Prostate gland (tissue), 2 donors: ENCODE measurements at regions of chr16 and their contacts with region 1.

Region 1: GRCh38 chr16:22190776-22191531 is 15.1 kb upstream of the EEF2K start:
- DNase-seq: peak; percentile 100
- H3K4me3 ChIP-seq: peak overlapping the region; percentile 34 to 68
- H3K27ac ChIP-seq: peak overlapping the region; percentile 96 to 98
- H3K4me1 ChIP-seq: peaks cover 12% of the 10 kb centered on the region
- H3K27me3 ChIP-seq: no peaks in the 10 kb centered on the region
- CTCF ChIP-seq: no peak
- POLR2A ChIP-seq: peak; percentile 95

Region 2: DNA sequence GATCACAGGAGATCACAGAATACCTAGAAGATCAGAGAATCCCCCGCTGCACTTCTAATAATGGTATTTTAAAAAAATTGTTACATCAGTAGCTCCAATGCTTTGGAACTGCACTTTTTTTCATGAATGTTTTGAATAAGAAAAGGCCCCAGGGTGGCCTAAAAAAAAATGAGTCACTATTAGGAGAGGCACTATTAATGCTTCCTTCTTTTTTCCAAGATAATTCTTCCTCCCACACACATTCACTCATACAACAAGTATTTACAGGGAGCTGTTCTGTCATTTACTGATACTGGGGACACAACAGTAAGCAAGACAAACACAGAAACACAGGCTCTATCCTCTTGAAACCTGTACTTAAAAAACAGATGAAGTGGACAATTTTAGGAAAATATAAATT is 189.4 kb before region 1 on chr16:
- intact Hi-C with region 1: loop called (anchors 2 kb)
- DNase-seq: no peak
- H3K4me3 ChIP-seq: no peak overlapping the region
- H3K27ac ChIP-seq: no peak overlapping the region
- H3K4me1 ChIP-seq: no peaks in the 10 kb centered on the region
- H3K27me3 ChIP-seq: no peaks in the 10 kb centered on the region
- CTCF ChIP-seq: no peak
- POLR2A ChIP-seq: no peak

Region 3: DNA sequence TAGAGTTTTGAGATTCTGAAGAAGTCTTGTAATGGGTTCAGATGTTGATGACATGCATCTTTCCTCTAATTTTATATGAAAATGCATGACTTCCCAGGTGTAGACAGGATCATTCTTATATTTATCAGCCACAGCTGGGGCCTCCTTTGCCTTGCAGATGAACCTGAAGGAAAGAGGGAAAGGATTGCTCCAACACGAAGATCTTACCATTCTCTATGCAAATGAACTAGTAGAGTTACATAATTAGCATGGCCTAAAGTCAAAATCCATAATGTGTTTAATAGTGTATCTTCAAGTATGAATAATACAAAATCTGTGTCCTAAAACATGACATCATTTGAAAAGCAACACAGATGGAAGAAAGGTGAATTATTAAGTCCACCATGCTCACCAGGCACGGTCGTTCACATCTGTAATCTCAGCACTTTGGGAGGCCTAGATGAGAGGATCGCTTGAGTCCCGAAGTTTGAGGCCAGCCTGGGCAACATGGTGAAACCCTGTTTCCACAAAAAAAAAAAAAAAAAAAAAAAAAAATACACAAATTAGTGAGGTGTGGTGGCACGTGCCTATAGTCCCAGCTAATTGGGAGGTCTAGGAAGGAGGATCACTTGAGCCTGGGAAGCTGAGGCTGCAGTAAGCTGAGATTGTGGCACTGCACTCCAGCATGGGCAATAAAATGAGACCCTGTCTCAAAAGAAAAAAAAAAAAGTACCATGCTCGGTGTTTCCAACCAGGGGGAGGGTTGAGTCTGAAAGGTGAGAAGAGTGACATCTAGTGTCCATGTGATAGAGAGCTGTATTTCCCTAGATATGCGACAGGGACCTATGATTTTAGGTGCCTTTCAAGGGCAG is 92.3 kb before region 1 on chr16:
- intact Hi-C with region 1: loop called (anchors 5 kb)
- DNase-seq: no peak
- H3K4me3 ChIP-seq: no peak overlapping the region
- H3K27ac ChIP-seq: no peak overlapping the region
- H3K4me1 ChIP-seq: no peaks in the 10 kb centered on the region
- H3K27me3 ChIP-seq: no peaks in the 10 kb centered on the region
- CTCF ChIP-seq: peak in 3 of 4 experiments; percentile 35 to 55 (median 39)
- POLR2A ChIP-seq: no peak

Region 4: DNA sequence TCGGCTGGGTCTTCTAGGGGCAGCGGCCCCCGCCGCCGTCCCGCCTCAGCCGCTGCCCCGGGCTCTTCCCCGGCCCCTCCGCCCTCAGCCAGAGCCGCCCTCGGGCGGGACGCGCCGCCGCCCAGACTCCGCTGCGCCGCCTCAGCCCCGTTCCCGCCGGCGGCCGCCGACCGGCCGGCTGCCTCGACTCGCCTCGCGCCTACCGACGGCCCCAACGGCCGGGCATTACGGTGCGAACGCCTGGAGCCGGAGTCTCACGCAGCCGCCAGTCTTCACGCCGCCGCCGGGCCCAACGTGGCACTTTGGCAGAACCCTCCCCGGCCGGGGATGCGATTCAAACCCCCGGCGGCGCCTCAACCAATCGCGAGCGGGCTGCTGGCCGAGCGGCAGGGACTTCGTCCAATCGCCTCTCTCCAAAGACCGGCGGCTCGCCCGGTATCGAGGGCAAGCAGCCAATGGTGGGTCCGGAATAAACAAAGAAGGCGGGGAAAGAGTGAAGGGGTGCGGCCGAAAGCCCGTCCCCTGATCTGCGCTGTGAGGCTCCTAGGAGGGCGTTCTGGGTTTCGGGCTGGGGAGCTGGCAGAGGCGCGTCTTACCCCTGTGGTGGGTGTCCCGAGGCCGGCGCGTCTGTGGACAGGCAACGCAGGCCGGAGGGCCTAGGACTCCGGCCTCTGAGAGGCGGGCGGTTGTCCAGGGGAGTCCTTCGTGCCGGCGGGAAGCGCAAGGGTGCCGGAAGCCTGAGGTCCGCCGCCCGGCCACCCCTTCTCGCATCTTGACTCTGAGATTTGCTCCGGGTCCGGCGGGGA is 183.6 kb after region 1 on chr16 and contains the start of gene CDR2:
- intact Hi-C with region 1: loop called (anchors 5 kb)
- DNase-seq: peak; percentile 98
- H3K4me3 ChIP-seq: peak within 1 kb of the TSS; percentile 88 to 89
- H3K27ac ChIP-seq: peak within 1 kb of the TSS; percentile 82 to 88
- H3K4me1 ChIP-seq: no peaks in the 10 kb centered on the region
- H3K27me3 ChIP-seq: no peaks in the 10 kb centered on the region
- CTCF ChIP-seq: peak in 1 of 4 experiments; percentile 6
- POLR2A ChIP-seq: peak; percentile 89
- total RNA-seq, gene CDR2: 24.5 to 31.9 TPM

Region 5: DNA sequence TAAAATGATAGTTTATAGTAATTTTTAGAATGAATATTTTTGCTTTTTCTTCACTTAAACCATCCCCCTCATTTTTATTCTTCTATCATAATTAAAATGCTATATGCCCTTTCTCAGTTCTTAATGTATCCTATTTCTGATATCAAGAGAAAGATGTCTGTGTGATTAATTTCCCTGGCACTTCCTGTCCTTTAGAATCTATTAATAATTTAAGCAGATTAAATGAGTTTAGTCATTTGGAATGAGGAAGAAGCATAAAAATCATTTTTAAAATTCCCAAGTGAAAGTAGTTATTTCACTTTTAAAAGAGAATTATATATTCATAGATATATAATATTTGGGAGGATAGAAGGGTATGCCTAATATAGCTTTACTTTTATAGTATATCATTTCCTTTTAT is 211.2 kb after region 1 on chr16:
- intact Hi-C with region 1: no loop called
- DNase-seq: no peak
- H3K4me3 ChIP-seq: no peak overlapping the region
- H3K27ac ChIP-seq: no peak overlapping the region
- H3K4me1 ChIP-seq: no peaks in the 10 kb centered on the region
- H3K27me3 ChIP-seq: no peaks in the 10 kb centered on the region
- CTCF ChIP-seq: no peak
- POLR2A ChIP-seq: no peak